Aorta (tissue), 5 donors: ENCODE measurements at regions of chr22 and their contacts with region 1.

Region 1: DNA sequence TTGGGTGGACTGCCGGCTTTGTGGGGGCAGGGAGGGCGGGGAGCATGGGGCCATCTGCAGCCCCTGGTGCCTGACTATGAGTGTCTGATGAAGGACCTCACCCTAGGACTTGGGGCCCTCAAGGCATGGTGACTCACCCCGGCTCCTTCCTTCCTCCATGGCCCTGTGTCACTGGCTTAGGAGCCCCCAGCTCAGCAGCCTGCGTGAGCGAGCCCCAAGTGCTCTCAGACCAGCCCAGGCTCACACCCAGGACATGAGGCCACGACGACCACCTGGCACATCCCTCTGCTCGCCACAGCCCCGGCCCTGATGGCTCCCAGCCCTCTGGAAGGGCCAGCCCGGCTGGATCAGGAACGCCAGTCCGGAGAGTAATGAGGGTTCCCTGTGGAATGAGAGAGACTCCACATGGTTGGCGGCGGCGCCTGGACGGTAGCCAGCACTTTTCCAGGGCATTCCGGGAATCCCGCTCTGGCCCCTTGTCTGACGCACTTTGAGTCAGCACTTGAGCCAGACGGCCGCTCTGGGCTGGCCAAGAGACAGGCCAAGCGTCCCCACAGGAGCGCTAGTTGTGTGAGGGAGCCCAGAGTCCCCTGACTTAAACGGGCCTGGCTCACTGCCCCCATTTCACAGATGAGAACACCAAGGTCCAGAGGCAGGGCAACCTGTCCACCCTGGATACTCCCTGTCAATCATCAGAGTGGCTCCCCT is 50.7 kb upstream of the SHISAL1 start:
- DNase-seq: peak; percentile 96 to 98
- ATAC-seq: peak; percentile 90
- H3K4me3 ChIP-seq: no peak overlapping the region
- H3K27ac ChIP-seq: peak overlapping the region in 1 of 2 donors; percentile 24
- H3K4me1 ChIP-seq: peaks cover 0 to 13% of the 10 kb centered on the region in 2 donors
- H3K27me3 ChIP-seq: no peaks in the 10 kb centered on the region

Region 2: GRCh38 chr22:44211946-44212930 is 151.2 kb before region 1 on chr22:
- intact Hi-C with region 1: loop called in 1 of 2 experiments (anchors 10 kb)
- DNase-seq: peak in 1 of 2 donors; percentile 84
- ATAC-seq: peak; percentile 63
- H3K4me3 ChIP-seq: no peak overlapping the region
- H3K27ac ChIP-seq: peak overlapping the region; percentile 11 to 53
- H3K4me1 ChIP-seq: no peaks in the 10 kb centered on the region
- H3K27me3 ChIP-seq: no peaks in the 10 kb centered on the region

Region 3: DNA sequence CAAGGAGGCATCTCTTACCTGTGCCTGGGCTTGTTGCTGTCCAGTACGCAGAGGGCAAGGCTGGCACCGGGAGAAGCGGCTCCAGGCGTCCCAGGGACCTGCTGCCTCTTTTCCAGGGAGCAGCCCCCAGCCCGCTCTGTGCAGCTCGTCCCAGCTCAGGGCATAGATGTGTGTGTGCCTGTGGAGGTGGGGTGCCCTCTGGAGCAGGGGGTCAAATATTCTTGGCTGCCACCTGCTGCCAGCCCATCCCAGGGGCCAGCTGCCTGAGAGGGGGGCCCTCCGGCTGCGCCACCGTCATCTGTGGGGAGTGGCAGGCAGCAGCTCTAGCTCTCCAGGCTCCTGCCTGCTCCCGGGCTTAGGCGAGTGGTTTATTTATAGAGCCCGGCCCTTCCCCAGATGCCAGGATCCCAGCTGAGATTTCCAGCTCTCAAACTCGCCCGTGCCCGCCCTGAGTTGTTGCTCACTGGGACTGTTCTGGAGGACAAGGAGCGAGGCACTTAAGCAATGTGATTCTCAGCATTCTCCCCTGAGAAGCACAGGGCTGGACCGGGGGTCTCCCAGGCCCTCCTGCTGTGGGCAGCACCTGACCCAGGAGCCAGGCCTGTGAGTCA is 47.1 kb after region 1 on chr22:
- intact Hi-C with region 1: no loop called
- DNase-seq: peak in 1 of 2 donors; percentile 68
- ATAC-seq: no peak
- H3K4me3 ChIP-seq: no peak overlapping the region
- H3K27ac ChIP-seq: no peak overlapping the region
- H3K4me1 ChIP-seq: no peaks in the 10 kb centered on the region
- H3K27me3 ChIP-seq: no peaks in the 10 kb centered on the region

Region 4: GRCh38 chr22:44448271-44448830 is 84.9 kb after region 1 on chr22:
- intact Hi-C with region 1: loop called in 1 of 2 experiments (anchors 5 kb)
- DNase-seq: peak; percentile 88 to 91
- ATAC-seq: peak; percentile 72
- H3K4me3 ChIP-seq: no peak overlapping the region
- H3K27ac ChIP-seq: no peak overlapping the region
- H3K4me1 ChIP-seq: no peaks in the 10 kb centered on the region
- H3K27me3 ChIP-seq: no peaks in the 10 kb centered on the region

Region 5: GRCh38 chr22:44497218-44497904 is 133.9 kb after region 1 on chr22:
- intact Hi-C with region 1: loop called (anchors 2 kb)
- DNase-seq: peak in 1 of 2 donors; percentile 56
- ATAC-seq: peak; percentile 34
- H3K4me3 ChIP-seq: peak overlapping the region; percentile 35 to 60
- H3K27ac ChIP-seq: no peak overlapping the region
- H3K4me1 ChIP-seq: no peaks in the 10 kb centered on the region
- H3K27me3 ChIP-seq: no peaks in the 10 kb centered on the region